ENCODE measurements at regions of chr13 and their contacts with region 1.

Region 1: GRCh38 chr13:32031025-32031814 is at the start of gene FRY:
- DNase-seq: peak; percentile 69
- H3K4me3 Mint-ChIP-seq: peak within 1 kb of the TSS; percentile 88
- H3K27ac Mint-ChIP-seq: peak within 1 kb of the TSS; percentile 53
- H3K4me1 Mint-ChIP-seq: peaks cover 25% of the 10 kb centered on the region
- H3K27me3 Mint-ChIP-seq: peaks cover 4% of the 10 kb centered on the region
- total RNA-seq, gene FRY: 4.4 to 5.3 TPM

Region 2: DNA sequence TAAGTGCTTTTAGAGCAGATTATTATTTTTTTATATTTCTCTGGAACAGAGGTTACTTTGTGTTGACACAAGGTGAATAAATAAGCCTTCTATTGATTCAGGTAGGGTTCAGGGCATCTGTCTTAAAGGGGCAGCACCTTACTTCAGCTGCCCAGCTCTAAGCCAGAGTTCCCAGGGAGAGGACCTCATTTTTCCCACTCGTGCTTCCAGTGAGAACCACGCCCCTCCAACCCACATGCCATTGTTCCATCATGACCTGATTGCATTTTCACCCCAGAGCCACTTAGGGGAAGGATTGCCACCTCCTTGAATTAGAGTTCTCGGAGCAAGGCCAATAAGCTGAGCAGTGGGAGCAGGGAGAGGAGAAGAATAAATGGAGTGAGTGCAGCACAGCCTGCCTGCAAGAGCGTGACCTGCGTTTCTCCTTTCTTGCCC is 104.0 kb before region 1 on chr13:
- CTCF ChIA-PET with region 1: no interaction called
- POLR2A ChIA-PET with region 1: no interaction called
- intact Hi-C with region 1: no loop called
- DNase-seq: no peak
- H3K4me3 Mint-ChIP-seq: no peak overlapping the region
- H3K27ac Mint-ChIP-seq: no peak overlapping the region
- H3K4me1 Mint-ChIP-seq: peaks cover 12% of the 10 kb centered on the region
- H3K27me3 Mint-ChIP-seq: no peaks in the 10 kb centered on the region

Region 3: DNA sequence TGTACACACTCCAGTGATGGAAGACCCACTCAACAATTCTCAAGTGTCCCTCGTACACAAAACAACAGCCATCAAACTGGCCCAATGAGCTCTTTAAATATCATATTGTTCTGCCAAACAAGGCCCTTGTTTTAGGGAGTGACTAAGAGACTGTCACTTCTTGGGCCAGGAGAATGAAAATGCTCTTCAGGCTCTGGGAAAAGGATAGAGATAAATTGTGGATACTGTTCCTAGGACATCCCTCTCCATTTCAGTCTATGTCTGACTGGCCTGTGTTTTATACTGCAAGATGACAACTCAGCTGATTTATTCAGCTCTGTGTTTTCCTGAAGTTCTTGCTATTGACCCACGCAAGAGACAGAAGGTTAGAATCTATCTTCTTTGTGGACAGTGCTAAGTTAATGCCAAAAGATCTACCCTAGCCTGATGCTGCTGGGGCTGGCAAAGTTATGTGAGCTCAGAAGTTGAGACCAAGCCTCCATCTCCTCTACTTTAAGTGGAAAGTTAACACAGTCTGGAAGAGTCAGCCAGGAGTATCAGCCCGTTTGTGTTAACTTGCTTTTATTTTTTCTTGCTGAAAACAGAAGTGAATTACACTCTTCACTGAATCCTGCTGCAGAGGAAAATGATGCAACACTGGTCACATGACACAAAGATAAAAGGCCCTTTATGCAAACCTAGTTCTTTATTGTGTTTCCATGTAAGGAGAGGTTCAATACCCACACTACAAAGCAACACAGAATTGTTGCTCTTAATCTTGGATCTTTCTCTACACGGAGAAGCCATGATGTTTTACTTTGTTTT is 15.0 kb after region 1 on chr13:
- CTCF ChIA-PET with region 1: interaction called, 4 read pairs
- POLR2A ChIA-PET with region 1: interaction called, 4 read pairs
- intact Hi-C with region 1: loop called (anchors 2 kb)
- DNase-seq: no peak
- H3K4me3 Mint-ChIP-seq: peak overlapping the region; percentile 50
- H3K27ac Mint-ChIP-seq: peak overlapping the region; percentile 82
- H3K4me1 Mint-ChIP-seq: peaks cover 57% of the 10 kb centered on the region
- H3K27me3 Mint-ChIP-seq: no peaks in the 10 kb centered on the region